Heart right ventricle (tissue), 16 donors: ENCODE measurements at regions of chr10 and their contacts with region 1.

Region 1: GRCh38 chr10:124827474-124827873 is 25.9 kb downstream of the ABRAXAS2 start:
- DNase-seq: no peak
- ATAC-seq: no peak
- H3K4me3 ChIP-seq: no peak overlapping the region
- H3K27ac ChIP-seq: no peak overlapping the region
- H3K4me1 ChIP-seq: no peaks in the 10 kb centered on the region
- H3K27me3 ChIP-seq: no peaks in the 10 kb centered on the region
- CTCF ChIP-seq: peak; percentile 25 to 72 (median 58)

Region 2: GRCh38 chr10:124522933-124523871 is 304.3 kb before region 1 on chr10:
- intact Hi-C with region 1: loop called in 1 of 10 experiments (anchors 5 kb)
- DNase-seq: peak in 1 of 2 donors; percentile 30
- ATAC-seq: peak in 4 of 8 donors; percentile 2 to 28 (median 16)
- H3K4me3 ChIP-seq: peak overlapping the region in 5 of 10 donors; percentile 10 to 43 (median 35)
- H3K27ac ChIP-seq: peak overlapping the region in 4 of 10 donors; percentile 43 to 88 (median 50)
- H3K4me1 ChIP-seq: peaks cover 0 to 36% (median 13%) of the 10 kb centered on the region in 9 donors
- H3K27me3 ChIP-seq: no peaks in the 10 kb centered on the region
- CTCF ChIP-seq: no peak

Region 3: GRCh38 chr10:124530215-124530665 is 297.2 kb before region 1 on chr10:
- intact Hi-C with region 1: loop called in 9 of 10 experiments (anchors 2 to 10 kb)
- DNase-seq: peak; percentile 87 to 90
- ATAC-seq: peak; percentile 75 to 91 (median 84)
- H3K4me3 ChIP-seq: no peak overlapping the region
- H3K27ac ChIP-seq: no peak overlapping the region
- H3K4me1 ChIP-seq: peaks cover 0 to 24% (median 6%) of the 10 kb centered on the region in 9 donors
- H3K27me3 ChIP-seq: no peaks in the 10 kb centered on the region
- CTCF ChIP-seq: peak; percentile 84 to 92 (median 89)

Region 4: DNA sequence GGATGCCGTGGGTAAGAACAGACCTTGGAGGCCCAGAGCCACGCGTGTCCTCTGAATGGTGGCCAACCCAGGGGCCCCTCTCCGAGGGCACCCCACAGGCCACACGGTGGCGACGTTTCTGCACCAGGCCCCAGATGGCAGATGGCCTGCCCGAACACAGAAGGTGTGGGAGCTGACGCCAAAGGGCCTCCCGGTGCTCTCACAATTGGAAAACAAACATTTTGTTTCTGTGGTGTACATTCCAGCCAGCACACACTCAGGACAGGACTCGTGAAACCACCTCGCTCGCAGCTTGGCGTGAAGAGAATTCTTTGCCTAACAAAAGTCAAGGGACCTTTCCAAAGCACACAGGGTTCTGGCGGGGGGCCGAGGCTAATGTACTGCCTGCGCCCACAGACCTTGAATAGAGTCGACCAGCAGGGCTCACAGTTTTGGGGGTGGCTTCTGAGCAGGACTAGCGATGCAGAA is 195.4 kb before region 1 on chr10:
- intact Hi-C with region 1: no loop called
- DNase-seq: peak; percentile 48 to 71
- ATAC-seq: peak; percentile 18 to 81 (median 76)
- H3K4me3 ChIP-seq: no peak overlapping the region
- H3K27ac ChIP-seq: peak overlapping the region; percentile 31 to 74 (median 63)
- H3K4me1 ChIP-seq: peaks cover 33 to 78% (median 68%) of the 10 kb centered on the region in 9 donors
- H3K27me3 ChIP-seq: no peaks in the 10 kb centered on the region
- CTCF ChIP-seq: peak; percentile 35 to 76 (median 58)